Heart left ventricle (tissue), 16 donors: ENCODE measurements at regions of chr3 and their contacts with region 1.

Region 1: GRCh38 chr3:17032407-17033034 is 147.8 kb downstream of the PLCL2 start:
- DNase-seq: no peak
- ATAC-seq: peak; percentile 51 to 76 (median 66)
- H3K4me3 ChIP-seq: no peak overlapping the region
- H3K27ac ChIP-seq: no peak overlapping the region
- H3K4me1 ChIP-seq: peaks cover 0 to 40% (median 7%) of the 10 kb centered on the region in 12 donors
- H3K27me3 ChIP-seq: no peaks in the 10 kb centered on the region
- CTCF ChIP-seq: peak; percentile 46 to 74 (median 68)
- POLR2A ChIP-seq: no peak

Region 2: DNA sequence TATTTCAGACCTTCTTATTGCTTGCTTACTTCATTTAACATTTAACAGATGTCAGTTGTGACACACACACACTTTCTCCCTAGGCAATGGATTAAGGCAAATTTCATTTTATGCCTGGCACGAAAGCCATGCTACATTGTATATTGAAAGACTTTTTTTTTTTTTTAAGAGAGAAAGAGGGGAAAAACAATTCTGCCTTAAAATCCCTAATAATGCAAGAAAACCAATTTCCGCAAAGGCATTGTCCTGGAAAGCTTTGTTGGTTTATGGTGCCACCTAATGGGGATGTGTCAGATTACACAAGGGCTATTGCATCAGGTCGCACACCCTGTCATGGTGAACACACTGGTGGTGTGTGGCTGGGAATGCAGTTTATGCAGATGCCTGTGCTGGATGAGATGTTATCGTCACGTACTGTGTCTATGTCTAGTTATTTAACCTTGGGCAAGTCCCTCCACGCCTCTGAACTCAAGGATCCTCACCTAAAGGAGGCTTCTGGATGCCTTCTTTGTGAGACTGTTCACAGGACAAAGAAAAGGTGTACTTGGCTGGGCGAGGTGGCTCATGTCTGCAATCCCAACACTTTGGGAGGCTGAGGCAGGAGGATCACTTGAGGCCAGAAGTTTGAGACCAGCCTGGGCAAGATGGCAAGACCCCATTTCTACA is 481.7 kb before region 1 on chr3:
- intact Hi-C with region 1: no loop called
- DNase-seq: peak in 3 of 5 donors; percentile 53 to 68 (median 58)
- ATAC-seq: peak; percentile 66 to 88 (median 79)
- H3K4me3 ChIP-seq: peak overlapping the region in 7 of 12 donors; percentile 9 to 34 (median 26)
- H3K27ac ChIP-seq: peak overlapping the region in 6 of 12 donors; percentile 4 to 49 (median 36)
- H3K4me1 ChIP-seq: peaks cover 0 to 26% (median 5%) of the 10 kb centered on the region in 12 donors
- H3K27me3 ChIP-seq: no peaks in the 10 kb centered on the region
- CTCF ChIP-seq: peak; percentile 85 to 93 (median 90)
- POLR2A ChIP-seq: no peak

Region 3: GRCh38 chr3:16600780-16601539 is 431.6 kb before region 1 on chr3:
- intact Hi-C with region 1: loop called (anchors 5 to 10 kb)
- DNase-seq: peak; percentile 73 to 85 (median 80)
- ATAC-seq: peak; percentile 48 to 76 (median 68)
- H3K4me3 ChIP-seq: peak overlapping the region in 3 of 12 donors; percentile 0 to 19 (median 14)
- H3K27ac ChIP-seq: no peak overlapping the region
- H3K4me1 ChIP-seq: peaks cover 0 to 7% (median 0%) of the 10 kb centered on the region in 12 donors
- H3K27me3 ChIP-seq: no peaks in the 10 kb centered on the region
- CTCF ChIP-seq: peak; percentile 73 to 96 (median 89)
- POLR2A ChIP-seq: no peak

Region 4: DNA sequence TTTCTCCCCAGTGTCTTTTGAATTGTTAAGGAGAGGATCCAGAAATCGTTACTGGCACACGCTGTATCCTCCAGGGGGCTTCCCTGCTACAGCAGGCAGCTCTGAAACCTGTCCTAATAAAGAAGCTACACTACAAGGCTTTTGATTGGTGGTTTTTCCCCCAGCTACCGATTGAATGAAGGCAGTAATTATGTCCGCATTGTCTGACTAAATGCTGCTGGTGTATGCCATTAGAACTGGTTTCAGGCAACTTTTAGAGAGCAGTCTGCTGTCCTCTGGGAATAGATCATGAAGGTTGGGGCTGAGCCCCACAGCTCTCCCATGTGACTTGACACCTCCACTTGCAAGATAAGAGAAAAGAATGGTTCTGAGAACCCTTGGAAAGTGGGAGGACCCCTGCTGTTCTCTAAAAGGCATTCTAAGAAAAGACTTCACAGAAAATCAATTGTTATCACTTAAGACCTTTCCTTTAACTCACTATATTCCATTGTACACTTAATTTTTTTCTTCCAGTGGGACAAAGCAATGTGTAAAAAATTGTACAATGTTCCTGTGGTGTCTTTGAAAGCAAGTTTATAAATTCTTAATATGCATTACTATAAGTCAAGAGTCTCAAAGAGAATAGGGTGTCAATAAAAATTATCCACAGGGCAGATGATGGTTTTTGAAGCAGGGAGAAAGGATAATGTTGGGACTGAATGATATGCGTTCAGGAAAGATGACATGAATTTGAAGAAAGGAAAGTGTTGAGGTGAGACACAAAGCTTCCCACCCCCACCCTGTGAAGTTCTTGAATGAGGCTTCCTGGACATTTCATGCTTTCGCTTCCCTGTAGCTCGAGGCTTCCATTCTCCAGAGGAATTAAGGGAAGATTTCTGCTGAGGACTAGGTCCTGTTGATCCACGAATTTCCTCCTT is 374.3 kb before region 1 on chr3:
- intact Hi-C with region 1: loop called in 1 of 10 experiments (anchors 5 kb)
- DNase-seq: peak in 1 of 5 donors; percentile 29
- ATAC-seq: peak in 2 of 4 donors; percentile 41 to 59
- H3K4me3 ChIP-seq: no peak overlapping the region
- H3K27ac ChIP-seq: no peak overlapping the region
- H3K4me1 ChIP-seq: peaks cover 0 to 7% (median 0%) of the 10 kb centered on the region in 12 donors
- H3K27me3 ChIP-seq: no peaks in the 10 kb centered on the region
- CTCF ChIP-seq: peak in 6 of 12 donors; percentile 17 to 42 (median 30)
- POLR2A ChIP-seq: no peak

Region 5: GRCh38 chr3:16897254-16897926 is 135.1 kb before region 1 on chr3:
- intact Hi-C with region 1: loop called in 3 of 10 experiments (anchors 5 kb)
- DNase-seq: peak in 1 of 5 donors; percentile 35
- ATAC-seq: peak in 1 of 4 donors; percentile 17
- H3K4me3 ChIP-seq: peak overlapping the region in 4 of 12 donors; percentile 5 to 29 (median 12)
- H3K27ac ChIP-seq: peak overlapping the region; percentile 26 to 79 (median 63)
- H3K4me1 ChIP-seq: peaks cover 0 to 59% (median 30%) of the 10 kb centered on the region in 12 donors
- H3K27me3 ChIP-seq: no peaks in the 10 kb centered on the region
- CTCF ChIP-seq: no peak
- POLR2A ChIP-seq: no peak

Region 6: GRCh38 chr3:16906682-16907081 is 125.8 kb before region 1 on chr3:
- intact Hi-C with region 1: loop called in 2 of 10 experiments (anchors 5 kb)
- DNase-seq: no peak
- ATAC-seq: peak; percentile 62 to 84 (median 72)
- H3K4me3 ChIP-seq: peak overlapping the region in 1 of 12 donors; percentile 3
- H3K27ac ChIP-seq: peak overlapping the region in 10 of 12 donors; percentile 7 to 67 (median 57)
- H3K4me1 ChIP-seq: peaks cover 7 to 85% (median 68%) of the 10 kb centered on the region in 12 donors
- H3K27me3 ChIP-seq: no peaks in the 10 kb centered on the region
- CTCF ChIP-seq: no peak
- POLR2A ChIP-seq: no peak

Region 7: DNA sequence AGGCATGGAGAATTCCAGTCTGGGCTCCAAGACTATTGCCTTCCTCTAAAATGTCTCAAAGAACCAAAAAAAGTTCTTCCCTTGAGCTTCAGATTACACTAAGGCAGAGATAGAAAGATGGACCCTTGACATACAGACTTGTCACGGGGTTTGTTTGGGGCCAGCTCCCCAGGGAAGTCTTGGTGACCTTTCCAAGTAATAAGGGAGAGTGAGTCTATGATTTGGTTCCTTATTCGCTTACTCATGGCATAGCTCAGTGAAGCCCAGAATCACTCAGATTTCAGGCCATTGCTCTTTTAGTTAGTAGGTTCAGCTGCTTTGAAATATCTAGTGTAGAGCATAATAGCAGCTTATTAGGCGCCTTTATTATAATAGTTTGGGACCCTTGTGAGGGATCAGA is 57.4 kb before region 1 on chr3:
- intact Hi-C with region 1: no loop called
- DNase-seq: no peak
- ATAC-seq: peak in 1 of 4 donors; percentile 17
- H3K4me3 ChIP-seq: no peak overlapping the region
- H3K27ac ChIP-seq: no peak overlapping the region
- H3K4me1 ChIP-seq: peaks cover 0 to 40% (median 8%) of the 10 kb centered on the region in 12 donors
- H3K27me3 ChIP-seq: no peaks in the 10 kb centered on the region
- CTCF ChIP-seq: no peak
- POLR2A ChIP-seq: no peak